ENCODE measurements at regions of chr6 and their contacts with region 1.

Region 1: GRCh38 chr6:1524040-1524480 is 85.7 kb upstream of the FOXC1 start:
- DNase-seq: peak; percentile 86
- H3K4me3 Mint-ChIP-seq: peak overlapping the region; percentile 65
- H3K27ac Mint-ChIP-seq: peak overlapping the region; percentile 92
- H3K4me1 Mint-ChIP-seq: peaks cover 53% of the 10 kb centered on the region
- H3K27me3 Mint-ChIP-seq: peaks cover 8% of the 10 kb centered on the region

Region 2: GRCh38 chr6:1536526-1537429 is 12.7 kb after region 1 on chr6:
- CTCF ChIA-PET with region 1: interaction called, 11 read pairs
- POLR2A ChIA-PET with region 1: no interaction called
- DNase-seq: peak; percentile 21
- H3K4me3 Mint-ChIP-seq: peak overlapping the region; percentile 57
- H3K27ac Mint-ChIP-seq: peak overlapping the region; percentile 92
- H3K4me1 Mint-ChIP-seq: peaks cover 41% of the 10 kb centered on the region
- H3K27me3 Mint-ChIP-seq: no peaks in the 10 kb centered on the region